Heart right ventricle (tissue), 16 donors: ENCODE measurements at regions of chr1 and their contacts with region 1.

Region 1: DNA sequence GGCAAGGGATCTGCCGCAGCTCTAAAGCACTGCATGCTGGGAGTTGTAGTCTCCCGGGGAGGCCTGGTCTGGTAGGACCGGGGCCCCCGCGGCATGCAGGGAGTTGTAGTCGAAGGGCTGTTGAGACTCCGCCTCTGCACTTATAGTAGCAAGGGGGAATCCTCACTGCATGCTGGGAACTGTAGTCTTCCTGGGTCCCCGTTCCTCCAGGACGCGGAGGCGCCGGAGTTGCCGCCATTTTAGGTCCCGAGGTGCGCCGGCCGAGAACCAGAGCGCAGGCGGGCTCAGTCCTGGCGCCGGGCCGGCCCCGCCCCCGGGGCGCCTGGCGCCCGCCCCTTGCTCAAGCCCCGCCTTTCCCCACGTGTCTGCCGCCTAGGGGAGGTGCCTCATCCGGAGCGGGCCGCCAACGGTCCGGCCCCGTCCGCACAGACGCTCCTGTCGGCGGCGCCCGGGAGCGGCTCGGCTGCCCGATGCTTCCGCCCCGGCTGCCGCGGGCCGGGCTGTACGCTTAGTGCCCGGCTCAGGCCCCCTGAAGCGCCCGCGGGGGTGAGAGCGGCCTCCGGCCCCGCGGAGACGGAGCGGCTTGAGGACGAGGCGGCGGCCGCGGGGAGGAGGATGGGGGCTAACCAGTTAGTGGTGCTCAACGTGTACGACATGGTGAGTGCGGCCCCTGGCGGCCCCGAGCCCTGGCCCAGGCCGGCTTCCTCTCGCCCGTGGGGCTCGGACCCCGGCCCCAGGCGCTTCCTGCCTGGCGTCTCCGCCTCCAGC is at the start of gene DESI2:
- DNase-seq: peak; percentile 97 to 99
- ATAC-seq: peak; percentile 96 to 99 (median 98)
- H3K4me3 ChIP-seq: peak within 1 kb of the TSS; percentile 71 to 97 (median 85)
- H3K27ac ChIP-seq: peak within 1 kb of the TSS; percentile 85 to 99 (median 96)
- H3K4me1 ChIP-seq: peaks cover 11 to 49% (median 40%) of the 10 kb centered on the region in 9 donors
- H3K27me3 ChIP-seq: no peaks in the 10 kb centered on the region
- CTCF ChIP-seq: peak; percentile 30 to 80 (median 55)
- total RNA-seq, gene DESI2: 16.4 to 24.0 (median 21.0) TPM

Region 2: GRCh38 chr1:244451951-244452795 is 200.7 kb before region 1 on chr1:
- intact Hi-C with region 1: loop called in 5 of 10 experiments (anchors 2 to 10 kb)
- DNase-seq: peak; percentile 99
- ATAC-seq: peak; percentile 97 to 100 (median 98)
- H3K4me3 ChIP-seq: peak overlapping the region in 9 of 10 donors; percentile 75 to 97 (median 85)
- H3K27ac ChIP-seq: peak overlapping the region in 9 of 10 donors; percentile 90 to 97 (median 95)
- H3K4me1 ChIP-seq: peaks cover 4 to 35% (median 16%) of the 10 kb centered on the region in 9 donors
- H3K27me3 ChIP-seq: no peaks in the 10 kb centered on the region
- CTCF ChIP-seq: peak; percentile 26 to 71 (median 50)

Region 3: GRCh38 chr1:244461245-244462071 is 191.4 kb before region 1 on chr1 and contains the start of gene CATSPERE:
- intact Hi-C with region 1: loop called in 3 of 10 experiments (anchors 5 to 10 kb)
- DNase-seq: peak; percentile 91 to 95
- ATAC-seq: peak; percentile 98 to 100 (median 98)
- H3K4me3 ChIP-seq: peak within 1 kb of the TSS; percentile 22 to 78 (median 66)
- H3K27ac ChIP-seq: peak within 1 kb of the TSS; percentile 63 to 94 (median 86)
- H3K4me1 ChIP-seq: peaks cover 0 to 16% (median 6%) of the 10 kb centered on the region in 9 donors
- H3K27me3 ChIP-seq: no peaks in the 10 kb centered on the region
- CTCF ChIP-seq: no peak
- total RNA-seq, gene CATSPERE: 0.15 to 0.83 (median 0.28) TPM in 9 of 10 donors, not detected in the other

Region 4: GRCh38 chr1:244576259-244576892 is 76.5 kb before region 1 on chr1:
- intact Hi-C with region 1: no loop called
- DNase-seq: no peak
- ATAC-seq: no peak
- H3K4me3 ChIP-seq: no peak overlapping the region
- H3K27ac ChIP-seq: no peak overlapping the region
- H3K4me1 ChIP-seq: no peaks in the 10 kb centered on the region
- H3K27me3 ChIP-seq: no peaks in the 10 kb centered on the region
- CTCF ChIP-seq: no peak

Region 5: DNA sequence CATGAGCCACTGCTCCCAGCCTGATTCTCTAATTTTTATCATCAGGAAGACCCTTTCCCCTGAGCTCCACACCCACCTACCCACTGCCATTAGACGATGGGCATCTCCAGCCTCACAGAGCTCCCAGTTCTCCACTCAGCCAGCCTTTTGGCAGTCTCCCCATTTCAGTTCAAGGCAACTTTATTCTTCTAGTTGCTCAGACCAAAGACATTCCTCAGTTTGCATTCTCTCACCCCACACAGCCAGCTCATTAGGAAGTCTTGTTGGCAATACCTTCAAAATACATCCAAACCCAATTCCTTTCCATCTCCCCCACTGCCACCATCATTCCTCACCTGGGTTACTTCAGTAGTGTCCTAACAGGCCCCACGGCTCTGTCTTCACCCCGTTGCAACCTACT is 129.2 kb after region 1 on chr1:
- intact Hi-C with region 1: no loop called
- DNase-seq: no peak
- ATAC-seq: no peak
- H3K4me3 ChIP-seq: no peak overlapping the region
- H3K27ac ChIP-seq: no peak overlapping the region
- H3K4me1 ChIP-seq: no peaks in the 10 kb centered on the region
- H3K27me3 ChIP-seq: no peaks in the 10 kb centered on the region
- CTCF ChIP-seq: no peak

Region 6: DNA sequence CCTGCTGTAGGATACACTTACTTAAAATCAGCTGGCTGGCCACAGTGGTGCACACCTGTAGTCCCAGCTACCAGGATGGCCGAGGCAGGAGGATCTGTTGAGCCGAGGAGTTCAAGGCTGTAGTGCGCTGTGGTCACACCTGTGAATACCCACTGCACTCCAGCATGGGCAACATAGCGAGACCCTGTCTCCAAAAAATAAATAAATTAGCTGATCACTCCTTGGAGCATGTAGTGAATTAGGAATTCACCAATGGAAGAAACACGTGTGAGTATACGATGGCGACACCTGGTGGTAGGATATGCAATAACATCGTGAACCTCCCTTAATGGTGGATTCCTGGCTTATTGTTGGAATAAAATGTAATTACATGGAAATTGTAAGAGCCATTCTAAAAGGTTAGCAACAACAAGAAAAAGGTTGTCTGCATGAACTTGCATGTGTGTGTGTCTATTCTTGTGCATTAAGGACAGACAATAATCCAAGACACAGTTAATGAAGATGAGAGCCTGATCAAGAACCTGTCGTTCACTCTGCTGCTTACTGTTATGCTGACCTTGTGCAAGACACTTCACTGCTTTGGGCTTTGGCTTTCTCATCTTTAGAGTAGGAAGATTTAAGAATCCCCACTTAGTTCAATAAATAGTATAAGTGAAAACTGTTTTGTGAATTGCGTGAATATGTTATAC is 144.0 kb after region 1 on chr1:
- intact Hi-C with region 1: loop called in 2 of 10 experiments (anchors 5 kb)
- DNase-seq: peak in 1 of 2 donors; percentile 48
- ATAC-seq: peak in 6 of 8 donors; percentile 64 to 72 (median 68)
- H3K4me3 ChIP-seq: no peak overlapping the region
- H3K27ac ChIP-seq: no peak overlapping the region
- H3K4me1 ChIP-seq: peaks cover 0 to 6% (median 0%) of the 10 kb centered on the region in 9 donors
- H3K27me3 ChIP-seq: no peaks in the 10 kb centered on the region
- CTCF ChIP-seq: peak; percentile 80 to 93 (median 87)

Region 7: GRCh38 chr1:244835276-244836134 is 182.6 kb after region 1 on chr1 and contains the start of gene COX20:
- intact Hi-C with region 1: loop called in 2 of 10 experiments (anchors 5 to 10 kb)
- DNase-seq: peak; percentile 89 to 92
- ATAC-seq: peak; percentile 83 to 95 (median 91)
- H3K4me3 ChIP-seq: peak within 1 kb of the TSS; percentile 49 to 90 (median 76)
- H3K27ac ChIP-seq: peak within 1 kb of the TSS; percentile 96 to 100 (median 99)
- H3K4me1 ChIP-seq: peaks cover 0 to 51% (median 45%) of the 10 kb centered on the region in 9 donors
- H3K27me3 ChIP-seq: no peaks in the 10 kb centered on the region
- CTCF ChIP-seq: peak in 3 of 9 donors; percentile 6 to 21 (median 8)
- total RNA-seq, gene COX20: 56.6 to 94.1 (median 64.4) TPM

Region 8: GRCh38 chr1:244970661-244971551 is 318.0 kb after region 1 on chr1:
- intact Hi-C with region 1: loop called in 3 of 10 experiments (anchors 2 to 10 kb)
- DNase-seq: peak; percentile 95
- ATAC-seq: peak; percentile 88 to 95 (median 89)
- H3K4me3 ChIP-seq: peak overlapping the region; percentile 44 to 80 (median 71)
- H3K27ac ChIP-seq: peak overlapping the region; percentile 97 to 100 (median 100)
- H3K4me1 ChIP-seq: peaks cover 0 to 26% (median 19%) of the 10 kb centered on the region in 9 donors
- H3K27me3 ChIP-seq: no peaks in the 10 kb centered on the region
- CTCF ChIP-seq: peak; percentile 37 to 86 (median 66)